ENCODE measurements at regions of chr16 and their contacts with region 1.

Region 1: GRCh38 chr16:81366316-81366932 is 51.7 kb downstream of the GAN start:
- DNase-seq: peak; percentile 46
- ATAC-seq: peak; percentile 89
- H3K4me3 ChIP-seq: no peak overlapping the region
- H3K27ac ChIP-seq: no peak overlapping the region
- H3K4me1 ChIP-seq: no peaks in the 10 kb centered on the region
- H3K27me3 ChIP-seq: no peaks in the 10 kb centered on the region
- CTCF ChIP-seq: peak; percentile 57 to 96 (median 89); a peak in 5 of 6 replicates
- POLR2A ChIP-seq: no peak
- RAD21 ChIP-seq: peak; percentile 95

Region 2: GRCh38 chr16:81623363-81624102 is 257.1 kb after region 1 on chr16:
- CTCF ChIA-PET with region 1: interaction called, 4 read pairs
- POLR2A ChIA-PET with region 1: no interaction called
- RAD21 ChIA-PET with region 1: no interaction called
- intact Hi-C with region 1: loop called (anchors 5 kb)
- DNase-seq: peak; percentile 53
- ATAC-seq: peak; percentile 70
- H3K4me3 ChIP-seq: no peak overlapping the region
- H3K27ac ChIP-seq: no peak overlapping the region
- H3K4me1 ChIP-seq: peaks cover 5 to 35% of the 10 kb centered on the region in 2 experiments; a peak in 3 of 4 replicates
- H3K27me3 ChIP-seq: no peaks in the 10 kb centered on the region
- CTCF ChIP-seq: peak; percentile 72 to 95 (median 93)
- POLR2A ChIP-seq: no peak
- RAD21 ChIP-seq: peak; percentile 99

Region 3: DNA sequence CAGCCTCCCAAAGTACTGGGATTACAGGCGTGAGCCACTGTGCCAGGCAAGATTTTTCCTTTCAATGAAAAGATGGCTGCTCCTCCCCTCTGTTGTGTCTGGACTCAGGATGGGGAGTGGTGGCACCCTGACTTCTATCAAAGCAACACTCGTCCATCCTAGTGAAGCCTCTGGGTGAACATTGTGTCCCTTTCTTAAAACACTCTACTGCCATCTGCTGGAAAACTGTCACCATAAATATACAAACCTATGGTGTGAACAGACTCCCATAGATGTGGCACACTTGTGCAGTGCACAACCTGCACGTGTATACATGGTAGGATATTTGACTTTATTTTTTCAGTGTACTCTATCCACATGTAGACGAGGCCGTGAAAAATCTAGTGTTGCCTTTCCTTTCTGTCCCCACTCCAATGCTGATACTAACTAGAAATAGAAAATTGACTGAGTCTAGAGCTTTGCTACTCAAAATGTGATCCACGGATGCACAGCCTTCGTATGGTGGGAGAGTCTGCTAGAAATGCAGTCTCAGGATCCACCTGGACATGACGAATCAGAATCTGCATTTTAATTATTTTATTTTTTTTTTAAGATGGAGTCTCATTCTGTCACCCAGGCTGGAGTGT is 356.8 kb after region 1 on chr16:
- CTCF ChIA-PET with region 1: interaction called, 4 read pairs
- POLR2A ChIA-PET with region 1: interaction called, 3 read pairs
- RAD21 ChIA-PET with region 1: no interaction called
- intact Hi-C with region 1: loop called (anchors 1 kb)
- DNase-seq: peak; percentile 92
- ATAC-seq: peak; percentile 90
- H3K4me3 ChIP-seq: no peak overlapping the region
- H3K27ac ChIP-seq: no peak overlapping the region
- H3K4me1 ChIP-seq: peaks cover 0 to 14% of the 10 kb centered on the region in 2 experiments; a peak in 2 of 4 replicates
- H3K27me3 ChIP-seq: no peaks in the 10 kb centered on the region
- CTCF ChIP-seq: peak; percentile 75 to 97 (median 91)
- POLR2A ChIP-seq: no peak
- RAD21 ChIP-seq: peak; percentile 100

Region 4: GRCh38 chr16:81737885-81738786 is 371.7 kb after region 1 on chr16:
- CTCF ChIA-PET with region 1: interaction called, 3 read pairs
- POLR2A ChIA-PET with region 1: no interaction called
- RAD21 ChIA-PET with region 1: no interaction called
- intact Hi-C with region 1: loop called (anchors 1 kb)
- DNase-seq: peak; percentile 79
- ATAC-seq: peak; percentile 96
- H3K4me3 ChIP-seq: peak overlapping the region; percentile 6 to 27; a peak in 2 of 4 replicates
- H3K27ac ChIP-seq: no peak overlapping the region
- H3K4me1 ChIP-seq: peaks cover 3 to 11% of the 10 kb centered on the region in 2 experiments; a peak in 3 of 4 replicates
- H3K27me3 ChIP-seq: no peaks in the 10 kb centered on the region
- CTCF ChIP-seq: peak; percentile 92 to 98 (median 95)
- POLR2A ChIP-seq: no peak
- RAD21 ChIP-seq: peak; percentile 99

Region 5: DNA sequence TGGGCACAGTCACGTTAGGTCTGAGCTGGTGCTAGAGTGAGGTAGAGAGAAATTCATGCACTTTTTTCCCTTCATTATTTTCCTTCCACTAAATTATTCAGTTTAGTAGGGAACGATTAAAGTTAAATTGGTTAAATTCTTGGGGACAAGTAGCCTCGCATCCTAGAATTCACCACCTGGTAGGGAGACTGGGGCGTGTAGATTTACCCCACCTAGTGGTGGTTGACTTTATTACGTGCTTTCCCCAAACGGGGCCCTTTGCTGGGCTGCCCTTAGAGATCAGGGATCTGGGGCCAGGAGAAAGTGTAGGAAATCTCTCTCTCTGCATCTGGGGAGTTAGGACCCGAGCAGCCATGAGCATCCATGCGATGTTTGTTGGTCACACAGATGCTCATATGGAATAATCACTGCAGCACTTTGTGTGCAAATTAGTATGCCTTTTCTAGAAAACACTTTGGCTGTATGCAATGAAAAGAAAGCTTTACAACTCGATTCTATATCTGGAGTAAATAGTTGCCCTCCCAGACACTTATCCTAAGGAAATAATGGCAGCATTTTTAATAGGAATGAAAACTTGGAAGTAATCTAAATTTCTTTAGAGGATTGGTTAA is 519.7 kb after region 1 on chr16:
- CTCF ChIA-PET with region 1: no interaction called
- POLR2A ChIA-PET with region 1: no interaction called
- RAD21 ChIA-PET with region 1: no interaction called
- intact Hi-C with region 1: loop called (anchors 5 kb)
- DNase-seq: peak; percentile 40
- ATAC-seq: peak; percentile 89
- H3K4me3 ChIP-seq: no peak overlapping the region
- H3K27ac ChIP-seq: no peak overlapping the region
- H3K4me1 ChIP-seq: no peaks in the 10 kb centered on the region
- H3K27me3 ChIP-seq: no peaks in the 10 kb centered on the region
- CTCF ChIP-seq: peak; percentile 67 to 89 (median 87); a peak in 5 of 6 replicates
- POLR2A ChIP-seq: no peak
- RAD21 ChIP-seq: peak; percentile 68

Measured in HCT116 (cell line).